WTC11 (cell line): ENCODE measurements at regions of chr1 and their contacts with region 1.

Region 1: DNA sequence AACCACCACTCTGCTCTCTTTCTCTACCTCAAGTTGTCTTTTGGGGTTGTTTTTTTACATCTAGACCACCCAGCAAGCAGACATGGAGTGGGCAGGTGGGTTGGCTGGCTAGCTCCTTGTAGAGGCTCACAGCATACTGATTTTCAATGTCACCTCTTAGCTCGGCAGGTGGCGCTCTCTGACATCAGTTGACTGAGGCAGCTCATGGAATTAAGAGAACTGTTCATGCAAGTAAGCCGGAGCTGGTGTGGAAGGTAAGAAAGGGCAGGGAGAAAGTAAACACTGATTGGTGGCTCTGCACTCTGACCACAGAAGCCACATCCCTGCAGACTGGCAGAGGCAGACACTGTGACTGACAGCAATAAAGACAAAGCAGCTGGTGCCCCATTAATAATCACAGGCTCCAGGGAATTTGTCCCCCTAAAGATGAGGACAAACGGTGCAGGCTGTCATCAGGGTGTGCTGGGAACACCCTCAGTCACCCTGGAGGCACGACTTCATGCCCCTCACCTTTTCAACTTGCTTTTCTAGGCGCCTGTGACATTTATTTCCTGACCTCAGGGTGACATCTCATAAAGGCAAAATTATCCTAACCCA is 226.8 kb downstream of the LMX1A start:
- DNase-seq: peak; percentile 89
- ATAC-seq: peak; percentile 99
- H3K4me3 Mint-ChIP-seq: no peak overlapping the region
- H3K27ac Mint-ChIP-seq: no peak overlapping the region
- H3K4me1 Mint-ChIP-seq: peaks cover 2% of the 10 kb centered on the region; the same call in 1 of the 2 replicates
- H3K27me3 Mint-ChIP-seq: no peaks in the 10 kb centered on the region; the same call in 1 of the 2 replicates
- CTCF ChIP-seq: peak; percentile 40; the same call in 1 of the 2 replicates

Region 2: GRCh38 chr1:164651351-164651951 is 478.2 kb before region 1 on chr1:
- CTCF ChIA-PET with region 1: no interaction called
- POLR2A ChIA-PET with region 1: no interaction called
- DNase-seq: no peak
- ATAC-seq: peak; percentile 9; the same call in 1 of the 2 replicates
- H3K4me3 Mint-ChIP-seq: peak overlapping the region; percentile 18; the same call in 1 of the 2 replicates
- H3K27ac Mint-ChIP-seq: peak overlapping the region; percentile 50
- H3K4me1 Mint-ChIP-seq: peaks cover 60% of the 10 kb centered on the region
- H3K27me3 Mint-ChIP-seq: no peaks in the 10 kb centered on the region
- CTCF ChIP-seq: no peak

Region 3: GRCh38 chr1:165114022-165114888 is 15.4 kb before region 1 on chr1:
- CTCF ChIA-PET with region 1: interaction called, 40 read pairs
- POLR2A ChIA-PET with region 1: interaction called, 4 read pairs
- DNase-seq: peak; percentile 72
- ATAC-seq: peak; percentile 75
- H3K4me3 Mint-ChIP-seq: no peak overlapping the region
- H3K27ac Mint-ChIP-seq: no peak overlapping the region
- H3K4me1 Mint-ChIP-seq: peaks cover 13% of the 10 kb centered on the region
- H3K27me3 Mint-ChIP-seq: peaks cover 50% of the 10 kb centered on the region
- CTCF ChIP-seq: peak; percentile 69

Region 4: GRCh38 chr1:165144757-165145397 is 15.2 kb after region 1 on chr1:
- CTCF ChIA-PET with region 1: interaction called, 28 read pairs
- POLR2A ChIA-PET with region 1: no interaction called
- DNase-seq: peak; percentile 71
- ATAC-seq: peak; percentile 90
- H3K4me3 Mint-ChIP-seq: no peak overlapping the region
- H3K27ac Mint-ChIP-seq: no peak overlapping the region
- H3K4me1 Mint-ChIP-seq: no peaks in the 10 kb centered on the region
- H3K27me3 Mint-ChIP-seq: peaks cover 29% of the 10 kb centered on the region
- CTCF ChIP-seq: no peak

Region 5: DNA sequence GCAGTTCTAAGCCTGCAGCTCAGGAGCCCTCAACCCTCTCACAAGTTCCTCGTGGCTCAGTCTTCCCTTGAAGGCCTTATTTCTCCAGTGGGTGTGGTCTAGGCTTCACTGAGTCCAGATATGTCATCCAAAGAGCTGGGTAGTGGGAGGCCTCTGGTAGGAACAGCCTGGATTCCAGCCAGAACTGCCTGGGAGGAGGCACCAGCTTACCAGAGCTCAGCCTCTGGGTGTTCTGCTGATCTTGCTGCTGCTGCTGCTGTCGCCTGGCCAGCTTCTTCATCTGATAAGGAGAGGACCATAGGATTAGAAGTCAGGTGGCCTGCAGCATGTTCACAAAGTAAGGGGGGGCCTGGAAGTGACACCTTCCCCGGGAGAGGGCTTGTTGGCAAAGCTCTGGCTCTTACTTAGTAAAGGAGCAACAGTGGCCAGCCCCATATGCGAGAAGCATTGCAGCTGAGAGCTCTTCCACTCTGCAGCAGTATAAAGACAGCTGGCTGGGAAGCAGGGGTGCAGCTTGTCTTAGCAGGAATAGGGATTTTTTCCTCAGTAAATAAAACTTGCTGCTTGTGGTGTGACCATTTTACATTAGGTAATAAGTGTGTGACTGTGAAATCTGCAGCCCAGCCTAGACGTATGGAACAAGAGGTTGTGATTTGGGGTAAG is 78.3 kb after region 1 on chr1:
- CTCF ChIA-PET with region 1: interaction called, 12 read pairs
- POLR2A ChIA-PET with region 1: no interaction called
- DNase-seq: no peak
- ATAC-seq: no peak
- H3K4me3 Mint-ChIP-seq: no peak overlapping the region
- H3K27ac Mint-ChIP-seq: no peak overlapping the region
- H3K4me1 Mint-ChIP-seq: peaks cover 22% of the 10 kb centered on the region
- H3K27me3 Mint-ChIP-seq: no peaks in the 10 kb centered on the region
- CTCF ChIP-seq: no peak

Region 6: GRCh38 chr1:165355977-165356811 is 226.5 kb after region 1 on chr1 and contains the start of gene LMX1A:
- CTCF ChIA-PET with region 1: interaction called, 17 read pairs
- POLR2A ChIA-PET with region 1: no interaction called
- DNase-seq: peak; percentile 53
- ATAC-seq: peak; percentile 11
- H3K4me3 Mint-ChIP-seq: peak within 1 kb of the TSS; percentile 74
- H3K27ac Mint-ChIP-seq: no peak within 1 kb of the TSS
- H3K4me1 Mint-ChIP-seq: peaks cover 47% of the 10 kb centered on the region
- H3K27me3 Mint-ChIP-seq: peaks cover 96% of the 10 kb centered on the region
- CTCF ChIP-seq: no peak
- total RNA-seq, gene LMX1A: not detected in 3 replicates